ENCODE measurements at regions of chr19 and their contacts with region 1.

Region 1: GRCh38 chr19:52336117-52336790 is at the start of gene ZNF610:
- DNase-seq: peak; percentile 89 to 92
- ATAC-seq: peak; percentile 99 to 100 (median 100)
- H3K4me3 ChIP-seq: peak within 1 kb of the TSS; percentile 77
- H3K27ac ChIP-seq: peak within 1 kb of the TSS; percentile 75
- H3K4me1 ChIP-seq: no peaks in the 10 kb centered on the region
- H3K27me3 ChIP-seq: no peaks in the 10 kb centered on the region
- CTCF ChIP-seq: no peak
- total RNA-seq, gene ZNF610: 0.06 to 3.7 (median 1.1) TPM

Region 2: DNA sequence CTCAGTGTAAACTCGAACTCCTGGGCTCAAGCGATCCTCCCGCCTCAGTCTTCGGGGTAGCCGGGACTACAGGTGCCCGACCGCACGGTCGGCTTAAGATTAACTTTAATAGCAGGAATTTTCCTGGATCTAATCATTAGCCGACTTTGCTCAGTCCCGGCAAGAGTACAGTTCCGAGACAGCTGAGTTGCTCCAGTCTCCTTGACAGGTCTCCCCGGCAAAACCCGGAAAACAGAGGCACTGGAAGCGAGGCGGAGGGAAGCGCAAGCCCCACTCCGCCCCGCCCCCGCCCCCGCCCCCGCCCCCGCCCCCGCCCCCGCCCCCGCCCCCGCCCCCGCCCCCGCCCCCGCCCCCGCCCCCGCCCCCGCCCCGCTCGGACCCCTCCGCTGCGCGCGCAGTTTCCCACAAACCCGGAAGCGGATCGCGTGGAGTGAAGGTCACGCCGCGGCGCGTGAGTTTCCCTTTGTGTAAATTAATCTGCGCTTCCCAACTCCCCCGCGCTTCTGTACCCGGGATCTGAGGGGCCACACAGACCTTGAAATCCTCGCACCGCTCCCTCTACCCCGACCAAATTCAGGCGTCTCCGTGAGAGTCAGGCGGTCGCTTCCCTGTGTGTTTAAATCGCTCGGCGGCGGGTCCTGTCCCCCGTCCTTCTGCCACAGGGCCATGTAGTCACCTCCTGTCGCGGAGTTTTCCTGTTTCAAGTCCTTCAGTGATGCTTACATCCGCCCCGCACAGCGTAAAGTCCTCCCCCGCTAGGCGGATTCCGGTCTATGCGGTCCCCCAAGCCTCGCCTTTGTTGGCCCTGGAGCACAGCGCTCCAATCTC is 39.3 kb before region 1 on chr19 and contains the start of gene ZNF480:
- intact Hi-C with region 1: no loop called
- DNase-seq: peak; percentile 89 to 94
- ATAC-seq: peak; percentile 82 to 92 (median 86)
- H3K4me3 ChIP-seq: peak within 1 kb of the TSS; percentile 68
- H3K27ac ChIP-seq: peak within 1 kb of the TSS; percentile 82
- H3K4me1 ChIP-seq: peaks cover 8% of the 10 kb centered on the region
- H3K27me3 ChIP-seq: no peaks in the 10 kb centered on the region
- CTCF ChIP-seq: no peak
- total RNA-seq, gene ZNF480: 6.2 to 10.5 (median 7.0) TPM

Region 3: GRCh38 chr19:52397310-52398080 is 61.2 kb after region 1 on chr19 and contains the start of gene ZNF528:
- intact Hi-C with region 1: loop called in 1 of 2 experiments (anchors 2 kb)
- DNase-seq: peak; percentile 97 to 98
- ATAC-seq: peak; percentile 99 to 100 (median 100)
- H3K4me3 ChIP-seq: peak within 1 kb of the TSS; percentile 82
- H3K27ac ChIP-seq: peak within 1 kb of the TSS; percentile 67
- H3K4me1 ChIP-seq: peaks cover 6% of the 10 kb centered on the region
- H3K27me3 ChIP-seq: no peaks in the 10 kb centered on the region
- CTCF ChIP-seq: no peak
- total RNA-seq, gene ZNF528: 5.8 to 12.8 (median 6.0) TPM

Region 4: DNA sequence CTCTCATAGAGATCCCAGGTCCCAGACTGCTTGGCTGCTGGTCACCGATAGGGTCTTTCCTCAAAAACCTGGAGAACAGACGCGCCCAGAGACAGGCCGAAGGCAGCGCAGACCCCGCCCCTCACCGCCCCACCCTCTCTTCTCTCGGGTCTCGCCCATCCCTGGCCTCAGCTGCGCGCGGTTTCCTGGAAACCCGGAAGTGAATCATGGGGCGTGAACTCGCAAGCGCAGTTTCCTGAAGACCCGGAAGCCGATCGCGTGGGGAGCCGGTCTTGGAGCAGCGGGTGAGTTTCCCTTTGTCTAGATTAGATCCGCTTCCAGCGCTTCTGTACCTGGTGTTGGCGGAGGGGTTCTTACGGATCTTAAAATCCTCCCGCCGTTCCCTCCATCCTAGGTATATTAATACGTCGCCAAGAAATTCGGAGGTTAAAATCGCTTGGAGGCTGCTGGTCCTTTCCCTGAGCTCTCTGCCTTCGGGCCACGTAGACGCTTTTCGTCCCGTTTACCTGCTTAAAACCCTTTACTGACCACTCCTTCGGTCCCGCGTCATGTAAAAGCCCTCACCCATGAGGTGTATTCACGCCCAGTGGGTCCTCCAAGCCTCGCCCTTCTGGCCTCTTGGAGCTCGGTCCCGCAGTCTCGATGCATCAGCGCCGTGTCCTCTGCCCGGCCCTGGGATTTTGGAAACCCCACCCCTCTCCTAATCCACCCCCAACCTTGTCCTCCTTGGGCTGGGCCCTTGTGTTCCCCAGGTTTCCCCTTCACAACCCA is 117.3 kb after region 1 on chr19 and contains the start of gene ZNF578:
- intact Hi-C with region 1: no loop called
- DNase-seq: peak; percentile 80 to 88
- ATAC-seq: peak; percentile 40 to 85 (median 78)
- H3K4me3 ChIP-seq: peak within 1 kb of the TSS; percentile 69
- H3K27ac ChIP-seq: no peak within 1 kb of the TSS
- H3K4me1 ChIP-seq: no peaks in the 10 kb centered on the region
- H3K27me3 ChIP-seq: peaks cover 0 to 4% (median 0%) of the 10 kb centered on the region in 3 donors
- CTCF ChIP-seq: no peak
- total RNA-seq, gene ZNF578: 0.25 to 0.71 (median 0.54) TPM